WTC11 (cell line): ENCODE measurements at regions of chr19 and their contacts with region 1.

Region 1: DNA sequence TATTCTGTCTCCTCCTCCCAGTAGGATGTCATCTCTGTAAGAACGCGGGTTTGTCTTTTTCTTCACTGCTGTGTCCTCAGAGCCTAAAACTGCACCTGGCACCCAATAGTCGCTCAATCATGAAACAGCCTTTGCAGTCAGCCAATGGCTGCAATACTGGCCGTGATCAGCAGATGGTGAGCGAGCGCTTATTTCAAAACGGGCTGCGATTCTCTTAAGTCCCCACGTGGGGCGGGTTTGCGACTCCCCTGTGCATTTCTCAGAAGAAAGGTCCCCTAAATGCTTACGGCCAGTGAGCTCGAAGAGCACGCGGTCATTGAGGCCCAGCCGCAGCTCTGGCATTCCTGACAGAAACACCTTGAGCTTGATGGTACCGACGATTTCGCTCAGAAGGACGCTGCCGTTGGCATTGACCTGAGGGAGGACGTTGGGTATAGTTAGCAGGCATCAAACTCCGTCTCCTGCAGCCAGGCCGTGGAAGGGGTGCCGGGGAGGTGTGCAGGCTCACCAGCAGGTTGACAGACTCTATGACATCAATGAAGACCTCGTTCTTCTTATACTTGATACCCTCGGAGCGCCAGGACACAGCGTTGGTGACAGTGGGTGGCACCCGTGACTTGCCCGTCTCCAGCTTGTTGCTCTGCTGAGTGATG is 6.0 kb downstream of the AP1M2 start:
- DNase-seq: peak; percentile 94
- ATAC-seq: peak; percentile 91
- H3K4me3 Mint-ChIP-seq: no peak overlapping the region
- H3K27ac Mint-ChIP-seq: peak overlapping the region; percentile 84
- H3K4me1 Mint-ChIP-seq: peaks cover 5% of the 10 kb centered on the region
- H3K27me3 Mint-ChIP-seq: no peaks in the 10 kb centered on the region
- CTCF ChIP-seq: peak; percentile 96

Region 2: GRCh38 chr19:10543420-10544241 is 37.5 kb before region 1 on chr19 and contains the start of gene ATG4D:
- CTCF ChIA-PET with region 1: interaction called, 12 read pairs
- POLR2A ChIA-PET with region 1: no interaction called
- DNase-seq: peak; percentile 92
- ATAC-seq: peak; percentile 87
- H3K4me3 Mint-ChIP-seq: peak within 1 kb of the TSS; percentile 83
- H3K27ac Mint-ChIP-seq: peak within 1 kb of the TSS; percentile 93
- H3K4me1 Mint-ChIP-seq: peaks cover 4% of the 10 kb centered on the region; the same call in 1 of the 2 replicates
- H3K27me3 Mint-ChIP-seq: peaks cover 6% of the 10 kb centered on the region
- CTCF ChIP-seq: no peak
- total RNA-seq, gene ATG4D: 50.3 to 59.4 TPM (median 53.8 TPM) in 3 replicates

Region 3: GRCh38 chr19:10560154-10560553 is 21.0 kb before region 1 on chr19:
- CTCF ChIA-PET with region 1: no interaction called
- POLR2A ChIA-PET with region 1: no interaction called
- DNase-seq: no peak
- ATAC-seq: no peak
- H3K4me3 Mint-ChIP-seq: no peak overlapping the region
- H3K27ac Mint-ChIP-seq: no peak overlapping the region
- H3K4me1 Mint-ChIP-seq: peaks cover 8% of the 10 kb centered on the region
- H3K27me3 Mint-ChIP-seq: no peaks in the 10 kb centered on the region
- CTCF ChIP-seq: no peak

Region 4: GRCh38 chr19:10593820-10594637 is 12.9 kb after region 1 on chr19:
- CTCF ChIA-PET with region 1: interaction called, 23 read pairs
- POLR2A ChIA-PET with region 1: no interaction called
- DNase-seq: no peak
- ATAC-seq: no peak
- H3K4me3 Mint-ChIP-seq: no peak overlapping the region
- H3K27ac Mint-ChIP-seq: no peak overlapping the region
- H3K4me1 Mint-ChIP-seq: no peaks in the 10 kb centered on the region
- H3K27me3 Mint-ChIP-seq: no peaks in the 10 kb centered on the region
- CTCF ChIP-seq: no peak

Region 5: GRCh38 chr19:10625003-10625776 is 44.1 kb after region 1 on chr19 and contains the start of gene SLC44A2:
- CTCF ChIA-PET with region 1: interaction called, 36 read pairs
- POLR2A ChIA-PET with region 1: no interaction called
- DNase-seq: peak; percentile 91
- ATAC-seq: peak; percentile 97
- H3K4me3 Mint-ChIP-seq: peak within 1 kb of the TSS; percentile 86
- H3K27ac Mint-ChIP-seq: peak within 1 kb of the TSS; percentile 95
- H3K4me1 Mint-ChIP-seq: peaks cover 18% of the 10 kb centered on the region
- H3K27me3 Mint-ChIP-seq: no peaks in the 10 kb centered on the region
- CTCF ChIP-seq: no peak
- total RNA-seq, gene SLC44A2: 102 to 111 TPM (median 109 TPM) in 3 replicates

Region 6: GRCh38 chr19:10730923-10731322 is 149.8 kb after region 1 on chr19:
- CTCF ChIA-PET with region 1: no interaction called
- POLR2A ChIA-PET with region 1: no interaction called
- DNase-seq: no peak
- ATAC-seq: no peak
- H3K4me3 Mint-ChIP-seq: no peak overlapping the region
- H3K27ac Mint-ChIP-seq: peak overlapping the region; percentile 49; the same call in 1 of the 2 replicates
- H3K4me1 Mint-ChIP-seq: 0 out of 2 replicates have a peak, but pooled peaks cover 3% of the 10 kb centered on the region
- H3K27me3 Mint-ChIP-seq: no peaks in the 10 kb centered on the region
- CTCF ChIP-seq: no peak